ENCODE measurements at regions of chr2 and their contacts with region 1.

Region 1: GRCh38 chr2:23824777-23825212 is 102.1 kb downstream of the ATAD2B start:
- DNase-seq: no peak
- H3K4me3 Mint-ChIP-seq: no peak overlapping the region
- H3K27ac Mint-ChIP-seq: no peak overlapping the region
- H3K4me1 Mint-ChIP-seq: peaks cover 2% of the 10 kb centered on the region
- H3K27me3 Mint-ChIP-seq: no peaks in the 10 kb centered on the region

Region 2: GRCh38 chr2:23114299-23114698 is 710.5 kb before region 1 on chr2:
- CTCF ChIA-PET with region 1: no interaction called
- POLR2A ChIA-PET with region 1: no interaction called
- intact Hi-C with region 1: no loop called
- DNase-seq: no peak
- H3K4me3 Mint-ChIP-seq: no peak overlapping the region
- H3K27ac Mint-ChIP-seq: no peak overlapping the region
- H3K4me1 Mint-ChIP-seq: no peaks in the 10 kb centered on the region
- H3K27me3 Mint-ChIP-seq: no peaks in the 10 kb centered on the region

Region 3: DNA sequence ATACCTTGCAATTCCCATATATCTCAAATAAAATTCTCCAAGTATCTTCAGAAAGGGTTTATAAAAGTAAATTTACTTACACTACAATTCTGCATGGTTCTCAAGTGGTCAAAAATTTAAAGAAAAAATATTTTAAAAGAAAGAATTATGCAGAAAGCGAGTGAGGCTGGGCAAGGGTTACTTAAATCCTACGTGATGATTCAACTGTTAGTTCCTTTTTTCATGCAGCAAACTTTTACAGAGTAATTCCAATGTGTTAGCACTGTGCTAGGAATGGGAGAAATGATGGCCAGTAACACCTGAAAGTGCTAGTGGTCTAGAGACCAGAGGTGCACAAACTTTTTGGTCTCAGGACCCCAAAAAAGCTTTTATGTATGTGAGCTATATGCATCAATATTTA is 31.3 kb before region 1 on chr2:
- CTCF ChIA-PET with region 1: no interaction called
- POLR2A ChIA-PET with region 1: no interaction called
- intact Hi-C with region 1: no loop called
- DNase-seq: no peak
- H3K4me3 Mint-ChIP-seq: no peak overlapping the region
- H3K27ac Mint-ChIP-seq: no peak overlapping the region
- H3K4me1 Mint-ChIP-seq: peaks cover 16% of the 10 kb centered on the region
- H3K27me3 Mint-ChIP-seq: no peaks in the 10 kb centered on the region

Region 4: DNA sequence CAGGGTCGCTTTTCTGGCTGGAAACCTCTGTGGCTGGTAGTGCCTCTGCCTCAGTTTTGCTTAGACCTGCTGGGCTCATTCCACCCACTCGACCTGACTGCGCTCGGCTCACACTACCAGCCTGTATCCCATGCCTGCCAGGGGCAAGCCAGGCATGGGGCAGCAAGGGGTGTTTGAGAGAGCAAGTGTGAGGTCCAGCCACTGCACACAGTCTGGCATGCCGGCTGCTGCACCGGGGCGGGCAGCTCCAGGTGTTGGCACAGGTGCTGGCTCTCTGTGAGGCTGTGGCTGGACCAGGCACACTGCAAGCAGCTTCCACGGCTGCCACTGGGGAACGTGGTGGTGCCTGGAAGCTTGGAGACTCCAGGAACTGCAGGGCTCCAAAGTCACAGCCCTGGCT is 11.2 kb after region 1 on chr2:
- CTCF ChIA-PET with region 1: interaction called, 26 read pairs
- POLR2A ChIA-PET with region 1: no interaction called
- intact Hi-C with region 1: no loop called
- DNase-seq: no peak
- H3K4me3 Mint-ChIP-seq: no peak overlapping the region
- H3K27ac Mint-ChIP-seq: no peak overlapping the region
- H3K4me1 Mint-ChIP-seq: no peaks in the 10 kb centered on the region
- H3K27me3 Mint-ChIP-seq: no peaks in the 10 kb centered on the region

Region 5: GRCh38 chr2:23867449-23867848 is 42.7 kb after region 1 on chr2:
- CTCF ChIA-PET with region 1: interaction called, 4 read pairs
- POLR2A ChIA-PET with region 1: no interaction called
- intact Hi-C with region 1: loop called (anchors 5 kb)
- DNase-seq: no peak
- H3K4me3 Mint-ChIP-seq: no peak overlapping the region
- H3K27ac Mint-ChIP-seq: peak overlapping the region; percentile 55
- H3K4me1 Mint-ChIP-seq: peaks cover 12% of the 10 kb centered on the region
- H3K27me3 Mint-ChIP-seq: no peaks in the 10 kb centered on the region

Region 6: GRCh38 chr2:24164125-24164973 is 339.6 kb after region 1 on chr2:
- CTCF ChIA-PET with region 1: interaction called, 33 read pairs
- POLR2A ChIA-PET with region 1: no interaction called
- intact Hi-C with region 1: loop called (anchors 1 kb)
- DNase-seq: peak; percentile 58
- H3K4me3 Mint-ChIP-seq: no peak overlapping the region
- H3K27ac Mint-ChIP-seq: no peak overlapping the region
- H3K4me1 Mint-ChIP-seq: no peaks in the 10 kb centered on the region
- H3K27me3 Mint-ChIP-seq: no peaks in the 10 kb centered on the region